IMR-90 (cell line): ENCODE measurements at regions of chr1 and their contacts with region 1.

Region 1: DNA sequence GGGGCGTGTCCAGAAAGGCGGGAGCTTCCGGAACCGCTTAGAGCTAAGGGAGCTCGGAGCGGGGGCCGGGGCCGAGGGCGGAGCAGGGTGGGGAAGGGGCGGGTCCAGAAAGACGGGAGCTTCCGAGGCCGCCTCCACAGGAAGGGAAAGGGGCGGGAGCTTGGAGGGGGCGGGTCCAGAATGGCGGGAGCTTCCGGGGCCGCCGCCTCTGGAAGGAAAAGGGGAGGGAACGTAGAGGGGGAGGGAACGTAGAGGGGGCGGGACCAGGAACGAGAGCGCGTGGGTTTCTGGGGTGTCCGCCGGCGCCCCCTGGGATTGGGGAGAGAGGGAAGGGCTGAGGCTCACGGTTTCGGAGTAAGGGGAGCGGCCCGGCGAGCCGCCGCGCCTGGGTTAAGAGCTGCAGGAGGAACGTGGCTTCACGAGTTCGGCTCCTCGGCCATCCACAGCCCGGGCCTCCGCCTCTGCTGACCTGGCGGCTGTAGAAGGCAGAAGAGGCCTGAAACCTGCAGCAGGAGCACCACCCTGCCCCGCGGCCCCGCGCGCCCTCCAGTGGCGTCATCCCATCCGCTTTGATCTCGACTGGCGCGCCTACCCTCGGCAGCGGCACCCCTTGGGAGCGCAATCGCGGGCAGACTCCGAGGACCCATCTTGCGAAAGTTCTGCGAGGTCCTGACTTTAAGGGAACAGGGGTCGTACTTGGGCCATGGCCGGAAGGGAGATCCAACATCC is 22.9 kb upstream of the HPDL start:
- DNase-seq: peak; percentile 96
- ATAC-seq: peak; percentile 96
- H3K4me3 ChIP-seq: peak overlapping the region; percentile 76
- H3K27ac ChIP-seq: peak overlapping the region; percentile 86
- H3K4me1 ChIP-seq: peaks cover 4% of the 10 kb centered on the region; the same call in 1 of the 2 replicates
- H3K27me3 ChIP-seq: no peaks in the 10 kb centered on the region
- CTCF ChIP-seq: peak; percentile 68
- POLR2A ChIP-seq: peak; percentile 72
- RAD21 ChIP-seq: peak; percentile 72

Region 2: GRCh38 chr1:44730741-44731512 is 572.8 kb before region 1 on chr1 and contains the start of gene RNU5D-1:
- CTCF ChIA-PET with region 1: no interaction called
- POLR2A ChIA-PET with region 1: no interaction called
- dilution Hi-C with region 1: no loop called
- in situ Hi-C with region 1: no loop called
- intact Hi-C with region 1: loop called (anchors 5 kb)
- DNase-seq: peak; percentile 98
- ATAC-seq: peak; percentile 84
- H3K4me3 ChIP-seq: peak within 1 kb of the TSS; percentile 9; the same call in 1 of the 2 replicates
- H3K27ac ChIP-seq: peak within 1 kb of the TSS; percentile 62
- H3K4me1 ChIP-seq: peaks cover 2% of the 10 kb centered on the region; the same call in 1 of the 2 replicates
- H3K27me3 ChIP-seq: no peaks in the 10 kb centered on the region
- CTCF ChIP-seq: peak; percentile 89
- POLR2A ChIP-seq: peak; percentile 99
- RAD21 ChIP-seq: peak; percentile 58
- total RNA-seq, gene RNU5D-1: not detected in 2 replicates

Region 3: DNA sequence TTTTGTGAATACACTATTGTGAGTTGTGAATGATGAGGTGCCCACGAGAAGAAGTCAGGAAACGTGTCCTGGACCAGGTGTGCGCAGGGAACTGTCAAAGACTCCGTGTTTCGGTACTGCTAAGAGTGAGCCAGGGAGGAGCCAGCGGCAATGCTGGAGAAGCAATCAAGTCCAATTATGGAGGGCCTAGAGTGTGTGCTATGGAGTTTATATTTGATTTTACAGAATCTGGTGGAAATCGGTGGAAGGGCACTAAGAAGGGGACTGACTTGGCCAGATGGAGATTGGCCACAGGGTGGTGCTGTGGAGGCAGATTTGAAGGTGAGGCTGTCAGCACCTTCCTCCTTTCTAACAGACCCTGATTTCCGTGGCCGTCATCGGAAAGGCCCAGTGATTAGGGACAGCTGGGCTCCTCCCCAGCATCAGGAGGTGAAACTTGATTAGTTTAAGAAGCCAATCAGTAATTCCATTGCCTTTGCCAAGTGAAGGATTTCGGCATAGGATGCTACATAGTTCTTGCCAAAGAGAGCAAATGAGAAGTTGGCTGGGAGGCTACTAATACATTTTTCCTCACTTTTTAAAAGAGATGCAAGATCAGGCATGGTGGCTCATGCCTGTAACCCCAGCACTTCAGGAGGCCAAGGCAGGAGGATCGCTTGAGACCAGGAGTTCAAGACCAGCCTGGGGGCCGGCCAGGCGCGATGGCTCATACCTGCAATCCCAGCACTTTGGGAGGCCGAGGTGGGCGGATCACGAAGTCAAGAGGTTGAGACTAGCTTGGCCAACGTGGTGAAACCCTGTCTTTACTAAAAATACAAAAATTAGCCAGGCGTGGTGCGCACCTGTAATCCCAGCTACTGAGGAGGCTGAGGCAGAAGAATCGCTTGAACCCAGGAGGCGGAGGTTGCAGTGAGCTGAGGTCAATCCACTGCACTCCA is 467.7 kb before region 1 on chr1:
- CTCF ChIA-PET with region 1: no interaction called
- POLR2A ChIA-PET with region 1: no interaction called
- dilution Hi-C with region 1: no loop called
- in situ Hi-C with region 1: loop called (anchors 10 kb)
- intact Hi-C with region 1: loop called (anchors 5 kb)
- DNase-seq: peak; percentile 84
- ATAC-seq: peak; percentile 96
- H3K4me3 ChIP-seq: no peak overlapping the region
- H3K27ac ChIP-seq: no peak overlapping the region
- H3K4me1 ChIP-seq: no peaks in the 10 kb centered on the region
- H3K27me3 ChIP-seq: no peaks in the 10 kb centered on the region
- CTCF ChIP-seq: peak; percentile 84
- POLR2A ChIP-seq: no peak
- RAD21 ChIP-seq: peak; percentile 88

Region 4: DNA sequence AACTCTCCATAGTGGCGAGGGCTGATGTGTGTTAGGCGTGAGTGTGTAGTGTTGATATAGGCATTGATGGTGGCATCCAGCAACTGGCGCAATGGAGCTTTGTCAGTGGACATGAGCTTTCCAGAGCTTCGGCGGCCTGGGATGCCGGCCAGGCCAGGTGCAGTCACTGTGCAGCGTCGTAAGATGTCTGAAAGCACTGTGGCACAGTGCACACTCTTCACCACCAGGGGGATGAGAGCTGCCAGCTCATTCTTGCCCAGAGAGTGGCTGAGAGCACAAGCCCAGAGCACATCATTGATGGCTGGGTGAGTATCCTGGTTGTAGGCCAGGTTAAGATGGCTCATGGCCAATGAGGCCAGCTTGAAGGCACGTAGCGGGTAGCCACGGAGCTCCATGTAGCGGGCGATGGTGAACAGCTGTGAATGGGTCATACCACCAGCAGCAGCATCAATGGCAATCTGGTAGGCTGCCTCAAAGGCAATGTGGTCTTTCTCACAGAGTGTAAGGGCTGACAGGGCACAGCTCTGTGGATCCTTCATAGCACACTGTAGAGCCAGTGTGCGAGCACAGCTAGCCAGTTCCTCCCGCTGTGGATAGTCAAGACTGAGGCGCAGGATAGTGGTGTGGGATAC is 285.0 kb before region 1 on chr1:
- CTCF ChIA-PET with region 1: interaction called, 53 read pairs
- POLR2A ChIA-PET with region 1: interaction called, 7 read pairs
- dilution Hi-C with region 1: no loop called
- in situ Hi-C with region 1: loop called (anchors 5 kb)
- intact Hi-C with region 1: loop called (anchors 1 kb)
- DNase-seq: peak; percentile 53
- ATAC-seq: peak; percentile 87
- H3K4me3 ChIP-seq: no peak overlapping the region
- H3K27ac ChIP-seq: no peak overlapping the region
- H3K4me1 ChIP-seq: peaks cover 3% of the 10 kb centered on the region; the same call in 1 of the 2 replicates
- H3K27me3 ChIP-seq: peaks cover 1% of the 10 kb centered on the region; the same call in 1 of the 2 replicates
- CTCF ChIP-seq: peak; percentile 76
- POLR2A ChIP-seq: no peak
- RAD21 ChIP-seq: peak; percentile 78

Region 5: GRCh38 chr1:45272983-45273382 is 30.8 kb before region 1 on chr1:
- CTCF ChIA-PET with region 1: no interaction called
- POLR2A ChIA-PET with region 1: no interaction called
- dilution Hi-C with region 1: no loop called
- in situ Hi-C with region 1: no loop called
- intact Hi-C with region 1: no loop called
- DNase-seq: peak; percentile 89
- ATAC-seq: peak; percentile 60
- H3K4me3 ChIP-seq: no peak overlapping the region
- H3K27ac ChIP-seq: no peak overlapping the region
- H3K4me1 ChIP-seq: no peaks in the 10 kb centered on the region
- H3K27me3 ChIP-seq: no peaks in the 10 kb centered on the region
- CTCF ChIP-seq: no peak
- POLR2A ChIP-seq: no peak
- RAD21 ChIP-seq: no peak

Region 6: DNA sequence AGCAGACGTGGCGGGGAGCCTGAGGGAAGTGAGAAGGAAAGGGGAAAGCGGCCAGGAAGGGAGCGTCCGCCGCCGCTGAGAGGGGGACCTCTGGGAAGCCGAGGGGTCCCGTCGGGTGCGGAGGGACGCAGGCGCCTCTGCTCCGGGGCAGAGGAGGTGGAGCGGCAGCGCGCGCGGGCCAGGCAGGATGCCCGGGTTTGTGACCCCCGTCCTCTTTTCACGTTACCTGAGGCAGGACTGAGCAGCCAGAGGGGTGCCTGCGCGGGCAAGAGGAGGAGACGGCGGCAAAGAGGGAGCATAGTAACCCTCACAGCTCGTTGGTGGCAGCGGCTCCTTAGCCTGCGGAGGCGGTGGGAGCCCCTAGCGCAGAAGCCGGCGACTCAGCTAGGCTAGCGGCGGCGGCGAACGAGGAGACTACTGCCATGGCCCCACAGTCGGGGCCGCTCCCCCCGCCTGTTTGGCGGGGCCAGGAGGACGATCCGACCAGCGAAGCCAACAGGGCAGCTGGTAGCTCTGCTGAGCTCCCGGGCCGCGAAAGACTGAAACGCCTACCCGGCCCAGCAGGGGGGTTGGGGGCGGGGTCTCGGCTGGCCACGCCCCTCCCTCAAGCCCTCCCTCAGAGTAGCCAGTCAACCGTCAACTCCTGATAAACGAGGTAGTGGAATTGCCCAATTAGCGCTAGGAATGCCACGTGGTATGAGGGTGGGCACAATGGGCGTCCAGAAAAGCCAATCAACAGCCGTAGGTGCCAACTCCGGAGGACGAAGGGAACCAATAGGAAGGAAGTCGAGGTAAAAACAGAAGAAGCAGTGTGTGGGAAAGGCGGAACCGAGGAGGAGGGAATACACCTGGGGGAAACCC is 187.1 kb after region 1 on chr1 and contains the start of gene TESK2:
- CTCF ChIA-PET with region 1: interaction called, 3 read pairs
- POLR2A ChIA-PET with region 1: no interaction called
- dilution Hi-C with region 1: no loop called
- in situ Hi-C with region 1: no loop called
- intact Hi-C with region 1: loop called (anchors 2 kb)
- DNase-seq: peak; percentile 99
- ATAC-seq: peak; percentile 96
- H3K4me3 ChIP-seq: peak within 1 kb of the TSS; percentile 63
- H3K27ac ChIP-seq: peak within 1 kb of the TSS; percentile 8
- H3K4me1 ChIP-seq: no peaks in the 10 kb centered on the region
- H3K27me3 ChIP-seq: no peaks in the 10 kb centered on the region
- CTCF ChIP-seq: 0 out of 2 replicates have a peak, but pooled peaks have one; percentile 14
- POLR2A ChIP-seq: peak; percentile 62; the same call in 1 of the 2 replicates
- RAD21 ChIP-seq: no peak
- total RNA-seq, gene TESK2: 0.83 and 0.90 TPM in 2 replicates